ENCODE measurements at regions of chr15 and their contacts with region 1.

Region 1: GRCh38 chr15:78761891-78762385 is 49.3 kb downstream of the ADAMTS7 start:
- DNase-seq: no peak
- ATAC-seq: no peak
- H3K4me3 ChIP-seq: no peak overlapping the region
- H3K27ac ChIP-seq: no peak overlapping the region
- H3K4me1 ChIP-seq: no peaks in the 10 kb centered on the region
- H3K27me3 ChIP-seq: peaks cover 0 to 9% of the 10 kb centered on the region in 2 experiments; a peak in 1 of 5 replicates
- CTCF ChIP-seq: no peak
- EP300 ChIP-seq: no peak
- POLR2A ChIP-seq: no peak
- RAD21 ChIP-seq: no peak

Region 2: GRCh38 chr15:77986891-77987764 is 774.8 kb before region 1 on chr15:
- CTCF ChIA-PET with region 1: no interaction called
- POLR2A ChIA-PET with region 1: no interaction called
- in situ Hi-C with region 1: loop called (anchors 5 kb)
- intact Hi-C with region 1: no loop called
- DNase-seq: no peak
- ATAC-seq: no peak
- H3K4me3 ChIP-seq: no peak overlapping the region
- H3K27ac ChIP-seq: no peak overlapping the region
- H3K4me1 ChIP-seq: peaks cover 40% of the 10 kb centered on the region
- H3K27me3 ChIP-seq: peaks cover 3 to 8% of the 10 kb centered on the region in 2 experiments; a peak in 1 of 5 replicates
- CTCF ChIP-seq: no peak
- EP300 ChIP-seq: no peak
- POLR2A ChIP-seq: no peak
- RAD21 ChIP-seq: no peak

Region 3: GRCh38 chr15:78830514-78831228 is 68.7 kb after region 1 on chr15:
- CTCF ChIA-PET with region 1: no interaction called
- POLR2A ChIA-PET with region 1: no interaction called
- in situ Hi-C with region 1: no loop called
- intact Hi-C with region 1: no loop called
- DNase-seq: no peak
- ATAC-seq: no peak; the same call in 1 of the 3 replicates
- H3K4me3 ChIP-seq: no peak overlapping the region
- H3K27ac ChIP-seq: no peak overlapping the region
- H3K4me1 ChIP-seq: peaks cover 20% of the 10 kb centered on the region
- H3K27me3 ChIP-seq: peaks cover 0 to 23% of the 10 kb centered on the region in 2 experiments; a peak in 2 of 5 replicates
- CTCF ChIP-seq: no peak
- EP300 ChIP-seq: no peak
- POLR2A ChIP-seq: no peak
- RAD21 ChIP-seq: no peak

Region 4: GRCh38 chr15:79071901-79072300 is 310.0 kb after region 1 on chr15:
- CTCF ChIA-PET with region 1: no interaction called
- POLR2A ChIA-PET with region 1: no interaction called
- in situ Hi-C with region 1: no loop called
- intact Hi-C with region 1: no loop called
- DNase-seq: no peak
- ATAC-seq: no peak
- H3K4me3 ChIP-seq: no peak overlapping the region
- H3K27ac ChIP-seq: no peak overlapping the region
- H3K4me1 ChIP-seq: peaks cover 8% of the 10 kb centered on the region
- H3K27me3 ChIP-seq: peaks cover 4% of the 10 kb centered on the region in 2 experiments; a peak in 3 of 5 replicates
- CTCF ChIP-seq: no peak
- EP300 ChIP-seq: no peak
- POLR2A ChIP-seq: no peak
- RAD21 ChIP-seq: no peak

Region 5: DNA sequence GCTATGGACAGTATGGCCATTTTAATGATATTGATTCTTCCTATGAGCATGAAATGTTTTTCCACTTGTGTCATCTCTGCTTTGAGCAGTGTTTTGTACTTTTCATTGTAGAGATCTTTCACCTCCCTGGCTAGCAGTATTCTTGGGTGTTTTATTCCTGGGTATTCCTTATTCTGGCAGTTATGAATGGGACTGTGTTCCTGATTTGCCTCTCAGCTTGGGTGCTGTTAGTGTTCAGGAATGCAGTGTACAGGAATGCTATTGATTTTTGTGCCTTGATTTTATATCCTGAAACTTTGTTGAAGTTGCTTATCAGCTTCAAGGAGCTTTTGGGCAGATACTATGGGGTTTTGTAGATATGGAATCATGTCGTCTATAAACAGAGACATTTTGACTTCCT is 1539.5 kb after region 1 on chr15:
- CTCF ChIA-PET with region 1: no interaction called
- POLR2A ChIA-PET with region 1: no interaction called
- in situ Hi-C with region 1: no loop called
- intact Hi-C with region 1: no loop called
- DNase-seq: no peak
- ATAC-seq: no peak
- H3K4me3 ChIP-seq: no peak overlapping the region
- H3K27ac ChIP-seq: no peak overlapping the region
- H3K4me1 ChIP-seq: no peaks in the 10 kb centered on the region
- H3K27me3 ChIP-seq: no peaks in the 10 kb centered on the region
- CTCF ChIP-seq: no peak
- EP300 ChIP-seq: no peak
- POLR2A ChIP-seq: no peak
- RAD21 ChIP-seq: no peak

Measured in HepG2 (cell line).